ENCODE measurements at regions of chr6 and their contacts with region 1.

Region 1: GRCh38 chr6:87393022-87393622 is 14.7 kb upstream of the CFAP206 start:
- DNase-seq: peak; percentile 78
- H3K4me3 ChIP-seq: no peak overlapping the region
- H3K27ac ChIP-seq: no peak overlapping the region
- H3K4me1 ChIP-seq: no peaks in the 10 kb centered on the region
- H3K27me3 ChIP-seq: no peaks in the 10 kb centered on the region
- CTCF ChIP-seq: peak; percentile 73

Region 2: GRCh38 chr6:87066449-87067333 is 326.4 kb before region 1 on chr6:
- CTCF ChIA-PET with region 1: no interaction called
- POLR2A ChIA-PET with region 1: no interaction called
- intact Hi-C with region 1: loop called (anchors 5 kb)
- DNase-seq: peak; percentile 77
- H3K4me3 ChIP-seq: no peak overlapping the region
- H3K27ac ChIP-seq: no peak overlapping the region
- H3K4me1 ChIP-seq: no peaks in the 10 kb centered on the region
- H3K27me3 ChIP-seq: no peaks in the 10 kb centered on the region
- CTCF ChIP-seq: peak; percentile 76

Region 3: DNA sequence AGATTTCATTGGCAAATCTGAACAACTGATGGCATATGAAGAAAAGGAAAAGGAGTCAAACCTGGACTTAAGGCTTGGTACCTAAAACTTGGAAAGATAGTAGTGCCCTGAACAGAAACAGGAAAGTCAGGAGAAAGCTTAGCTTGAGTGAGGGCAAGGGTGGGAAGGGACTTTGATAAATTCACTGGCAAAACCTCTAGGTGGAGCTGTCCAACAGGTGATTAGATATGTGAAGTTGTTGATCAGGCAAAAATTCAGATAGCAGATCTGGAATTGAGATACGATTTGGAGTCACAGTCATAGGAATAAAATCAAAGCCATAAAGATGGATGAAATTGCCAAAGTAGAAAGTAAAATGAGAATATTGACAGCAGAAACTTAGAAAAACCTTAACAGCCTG is 253.9 kb before region 1 on chr6:
- CTCF ChIA-PET with region 1: no interaction called
- POLR2A ChIA-PET with region 1: no interaction called
- intact Hi-C with region 1: loop called (anchors 5 kb)
- DNase-seq: peak; percentile 71
- H3K4me3 ChIP-seq: no peak overlapping the region
- H3K27ac ChIP-seq: no peak overlapping the region
- H3K4me1 ChIP-seq: no peaks in the 10 kb centered on the region
- H3K27me3 ChIP-seq: peaks cover 4% of the 10 kb centered on the region
- CTCF ChIP-seq: peak; percentile 73

Region 4: DNA sequence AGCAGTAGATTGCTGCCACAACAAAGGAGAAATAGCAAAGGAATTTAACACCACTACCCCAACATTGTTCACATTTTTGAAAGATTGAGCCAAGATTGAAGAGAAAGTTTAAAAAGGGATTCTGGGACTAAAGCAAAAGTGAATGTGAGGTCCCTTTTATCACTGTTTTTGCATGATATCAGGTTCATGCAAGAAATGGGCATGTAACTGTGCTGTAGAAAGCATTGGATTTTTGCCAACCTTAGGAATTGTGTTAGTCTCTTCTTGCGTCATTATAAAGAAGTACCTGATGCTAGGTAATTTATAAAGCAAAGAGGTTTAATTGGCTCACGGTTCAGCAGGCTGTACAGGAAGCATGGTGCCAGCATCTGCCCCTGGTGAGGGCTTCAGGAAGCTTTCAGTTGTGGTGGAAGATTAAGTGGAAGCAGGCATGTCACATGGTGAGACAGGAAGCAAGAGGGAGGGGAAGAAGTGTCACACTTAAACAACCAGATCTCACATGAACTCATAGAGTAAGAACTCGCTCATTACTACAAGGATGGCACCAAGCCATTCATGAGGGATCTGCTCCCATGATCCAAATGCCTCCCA is 59.4 kb before region 1 on chr6:
- CTCF ChIA-PET with region 1: no interaction called
- POLR2A ChIA-PET with region 1: no interaction called
- intact Hi-C with region 1: no loop called
- DNase-seq: peak; percentile 71
- H3K4me3 ChIP-seq: no peak overlapping the region
- H3K27ac ChIP-seq: no peak overlapping the region
- H3K4me1 ChIP-seq: no peaks in the 10 kb centered on the region
- H3K27me3 ChIP-seq: no peaks in the 10 kb centered on the region
- CTCF ChIP-seq: no peak

Region 5: DNA sequence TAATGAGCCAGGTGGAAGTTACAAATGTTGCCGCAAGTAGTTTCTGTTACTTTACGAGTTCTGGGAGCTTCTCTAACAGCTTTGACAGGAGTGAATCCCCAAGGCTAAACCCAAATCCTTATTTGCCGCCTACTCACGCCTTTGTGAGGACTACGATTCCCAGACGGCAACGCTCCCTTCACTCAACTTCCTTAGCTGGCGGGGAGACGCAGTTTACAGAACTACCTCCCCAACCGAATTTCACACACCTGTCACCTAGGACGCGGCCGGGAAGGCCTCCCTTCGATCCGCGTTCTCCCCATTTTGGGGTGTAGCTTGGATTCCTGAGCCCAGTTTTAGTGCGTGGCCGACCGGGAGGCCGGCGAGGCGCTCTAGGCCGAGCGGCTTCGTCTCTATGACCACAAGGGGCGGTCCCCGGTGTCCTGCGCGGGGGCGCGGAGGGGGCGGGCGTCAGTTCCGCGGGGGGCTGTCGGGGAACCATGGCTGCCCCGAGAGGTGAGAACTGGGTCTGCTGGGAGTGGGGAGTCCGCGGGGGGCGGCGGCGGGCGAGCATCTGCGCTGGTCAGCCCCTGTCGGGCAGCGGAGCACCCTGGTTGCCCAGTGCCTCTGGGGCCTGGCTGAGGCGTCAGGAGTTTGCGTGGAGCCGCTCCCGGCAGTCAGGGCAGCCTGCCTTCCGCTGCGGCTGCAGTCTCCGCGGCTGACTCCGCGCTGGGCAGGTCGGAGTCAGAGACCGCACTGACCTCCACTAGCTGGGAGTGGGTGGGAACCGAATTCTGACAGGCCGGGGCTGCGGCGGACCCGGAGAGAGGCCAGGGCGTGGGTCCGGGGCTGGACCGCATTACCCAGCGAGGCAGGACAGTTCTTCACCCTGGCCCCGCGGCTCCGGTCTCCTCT is 79.7 kb after region 1 on chr6 and contains the start of gene SLC35A1:
- CTCF ChIA-PET with region 1: no interaction called
- POLR2A ChIA-PET with region 1: no interaction called
- intact Hi-C with region 1: no loop called
- DNase-seq: peak; percentile 87
- H3K4me3 ChIP-seq: peak within 1 kb of the TSS; percentile 85
- H3K27ac ChIP-seq: peak within 1 kb of the TSS; percentile 85
- H3K4me1 ChIP-seq: peaks cover 5% of the 10 kb centered on the region
- H3K27me3 ChIP-seq: peaks cover 9% of the 10 kb centered on the region
- CTCF ChIP-seq: no peak
- total RNA-seq, gene SLC35A1: 11.5 and 13.0 TPM in 2 replicates

Region 6: DNA sequence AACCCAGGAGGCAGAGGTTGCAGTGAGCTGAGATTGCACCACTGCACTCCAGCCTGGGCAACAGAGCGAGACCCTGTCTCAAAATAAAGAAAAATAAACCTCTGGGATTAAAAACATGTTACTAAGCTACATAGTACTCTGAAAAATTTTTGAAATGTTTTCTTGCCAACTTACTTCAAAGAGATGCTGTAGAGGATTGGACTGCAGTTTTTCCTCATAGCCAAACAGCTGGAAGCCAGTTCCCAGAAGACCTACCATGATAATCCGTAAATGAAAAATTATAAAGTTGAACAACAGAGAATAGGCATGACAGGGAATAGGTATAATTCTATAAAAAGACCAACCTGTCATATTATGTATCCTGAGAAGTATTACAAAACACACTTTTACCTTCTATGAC is 148.6 kb after region 1 on chr6:
- CTCF ChIA-PET with region 1: no interaction called
- POLR2A ChIA-PET with region 1: no interaction called
- intact Hi-C with region 1: no loop called
- DNase-seq: no peak
- H3K4me3 ChIP-seq: no peak overlapping the region
- H3K27ac ChIP-seq: no peak overlapping the region
- H3K4me1 ChIP-seq: no peaks in the 10 kb centered on the region
- H3K27me3 ChIP-seq: no peaks in the 10 kb centered on the region
- CTCF ChIP-seq: no peak

Region 7: GRCh38 chr6:87799651-87800050 is 406.5 kb after region 1 on chr6:
- CTCF ChIA-PET with region 1: no interaction called
- POLR2A ChIA-PET with region 1: no interaction called
- intact Hi-C with region 1: loop called (anchors 10 kb)
- DNase-seq: no peak
- H3K4me3 ChIP-seq: no peak overlapping the region
- H3K27ac ChIP-seq: no peak overlapping the region
- H3K4me1 ChIP-seq: no peaks in the 10 kb centered on the region
- H3K27me3 ChIP-seq: no peaks in the 10 kb centered on the region
- CTCF ChIP-seq: no peak

Region 8: GRCh38 chr6:87944541-87944954 is 551.4 kb after region 1 on chr6:
- CTCF ChIA-PET with region 1: no interaction called
- POLR2A ChIA-PET with region 1: no interaction called
- intact Hi-C with region 1: loop called (anchors 10 kb)
- DNase-seq: no peak
- H3K4me3 ChIP-seq: no peak overlapping the region
- H3K27ac ChIP-seq: no peak overlapping the region
- H3K4me1 ChIP-seq: no peaks in the 10 kb centered on the region
- H3K27me3 ChIP-seq: no peaks in the 10 kb centered on the region
- CTCF ChIP-seq: no peak

Region 9: DNA sequence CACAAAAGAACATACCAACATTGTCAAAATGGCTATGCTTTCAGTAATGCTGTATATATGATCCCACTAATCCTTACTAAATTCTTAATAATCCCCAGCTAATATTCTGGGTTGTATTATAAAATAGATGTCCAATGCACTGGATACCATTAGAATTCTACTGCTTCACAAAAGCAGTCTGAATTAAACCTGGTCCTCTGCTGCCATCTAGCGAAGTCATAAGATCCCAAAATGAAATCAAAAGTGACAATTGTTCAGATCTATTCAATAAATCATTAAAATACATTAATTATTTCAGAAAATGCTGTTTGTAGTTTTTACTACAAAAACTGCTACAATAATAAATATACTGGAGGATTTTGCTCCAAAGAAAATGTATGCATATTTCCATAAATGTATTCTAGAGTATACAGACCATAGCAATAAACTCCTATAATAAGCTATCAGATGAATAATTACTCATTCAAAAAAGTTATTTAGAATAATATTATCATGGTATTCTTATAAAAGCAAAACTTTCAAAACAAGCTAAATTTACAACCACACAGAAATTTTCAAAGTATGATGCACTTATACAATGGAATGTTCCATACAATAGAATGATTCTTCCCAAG is 1477.7 kb after region 1 on chr6:
- CTCF ChIA-PET with region 1: no interaction called
- POLR2A ChIA-PET with region 1: no interaction called
- intact Hi-C with region 1: loop called (anchors 10 kb)
- DNase-seq: peak; percentile 70
- H3K4me3 ChIP-seq: no peak overlapping the region
- H3K27ac ChIP-seq: no peak overlapping the region
- H3K4me1 ChIP-seq: no peaks in the 10 kb centered on the region
- H3K27me3 ChIP-seq: no peaks in the 10 kb centered on the region
- CTCF ChIP-seq: peak; percentile 77

Measured in A673 (cell line).